Natural killer cell (primary cell): ENCODE measurements at regions of chr10 and their contacts with region 1.

Region 1: DNA sequence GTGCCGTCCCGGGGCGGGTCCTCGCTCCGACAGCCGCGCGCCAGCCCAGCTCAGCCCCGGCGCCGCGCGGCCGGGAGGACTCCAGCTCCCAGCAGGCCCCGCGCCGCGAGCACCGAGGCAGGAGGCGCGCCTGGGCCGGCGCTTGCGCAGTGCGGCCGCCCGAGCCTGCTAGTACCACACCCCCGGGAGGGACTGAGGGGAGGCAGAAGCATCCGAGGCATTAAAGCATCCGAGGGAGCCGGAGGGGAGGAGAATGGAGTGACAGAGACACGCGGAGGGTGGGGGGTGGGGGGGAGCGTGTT is at the start of gene GRK5:
- DNase-seq: peak; percentile 91 to 99
- ATAC-seq: peak; percentile 79 to 92 (median 84)
- H3K4me3 ChIP-seq: peak within 1 kb of the TSS; percentile 47
- H3K4me3 Mint-ChIP-seq: peak within 1 kb of the TSS; percentile 95
- H3K27ac ChIP-seq: peak within 1 kb of the TSS; percentile 70
- H3K27ac Mint-ChIP-seq: peak within 1 kb of the TSS; percentile 94
- H3K4me1 ChIP-seq: peaks cover 34% of the 10 kb centered on the region
- H3K4me1 Mint-ChIP-seq: peaks cover 45 to 47% of the 10 kb centered on the region in 2 donors
- H3K27me3 ChIP-seq: no peaks in the 10 kb centered on the region
- H3K27me3 Mint-ChIP-seq: no peaks in the 10 kb centered on the region
- CTCF ChIP-seq: no peak
- total RNA-seq, gene GRK5: 37.6 to 54.3 (median 47.9) TPM

Region 2: GRCh38 chr10:118986815-118987790 is 220.2 kb before region 1 on chr10:
- intact Hi-C with region 1: no loop called
- DNase-seq: no peak
- ATAC-seq: no peak
- H3K4me3 ChIP-seq: no peak overlapping the region
- H3K4me3 Mint-ChIP-seq: no peak overlapping the region
- H3K27ac ChIP-seq: no peak overlapping the region
- H3K27ac Mint-ChIP-seq: no peak overlapping the region
- H3K4me1 ChIP-seq: no peaks in the 10 kb centered on the region
- H3K4me1 Mint-ChIP-seq: peaks cover 0 to 6% of the 10 kb centered on the region in 2 donors
- H3K27me3 ChIP-seq: no peaks in the 10 kb centered on the region
- H3K27me3 Mint-ChIP-seq: peaks cover 11 to 32% of the 10 kb centered on the region in 2 donors
- CTCF ChIP-seq: no peak

Region 3: GRCh38 chr10:119178372-119179119 is 28.8 kb before region 1 on chr10 and contains the start of gene PRDX3:
- intact Hi-C with region 1: loop called (anchors 2 kb)
- DNase-seq: peak; percentile 90 to 94
- ATAC-seq: peak; percentile 98 to 99 (median 99)
- H3K4me3 ChIP-seq: peak within 1 kb of the TSS; percentile 96
- H3K4me3 Mint-ChIP-seq: peak within 1 kb of the TSS; percentile 97
- H3K27ac ChIP-seq: peak within 1 kb of the TSS; percentile 75
- H3K27ac Mint-ChIP-seq: peak within 1 kb of the TSS; percentile 87 to 98
- H3K4me1 ChIP-seq: peaks cover 19% of the 10 kb centered on the region
- H3K4me1 Mint-ChIP-seq: peaks cover 6 to 13% of the 10 kb centered on the region in 2 donors
- H3K27me3 ChIP-seq: no peaks in the 10 kb centered on the region
- H3K27me3 Mint-ChIP-seq: no peaks in the 10 kb centered on the region
- CTCF ChIP-seq: peak; percentile 14
- total RNA-seq, gene PRDX3: 12.5 to 17.4 (median 15.3) TPM

Region 4: GRCh38 chr10:119219871-119220270 is 12.6 kb after region 1 on chr10:
- intact Hi-C with region 1: loop called (anchors 1 kb)
- DNase-seq: no peak
- ATAC-seq: no peak
- H3K4me3 ChIP-seq: no peak overlapping the region
- H3K4me3 Mint-ChIP-seq: no peak overlapping the region
- H3K27ac ChIP-seq: no peak overlapping the region
- H3K27ac Mint-ChIP-seq: no peak overlapping the region
- H3K4me1 ChIP-seq: no peaks in the 10 kb centered on the region
- H3K4me1 Mint-ChIP-seq: peaks cover 16 to 26% of the 10 kb centered on the region in 2 donors
- H3K27me3 ChIP-seq: no peaks in the 10 kb centered on the region
- H3K27me3 Mint-ChIP-seq: no peaks in the 10 kb centered on the region
- CTCF ChIP-seq: no peak

Region 5: DNA sequence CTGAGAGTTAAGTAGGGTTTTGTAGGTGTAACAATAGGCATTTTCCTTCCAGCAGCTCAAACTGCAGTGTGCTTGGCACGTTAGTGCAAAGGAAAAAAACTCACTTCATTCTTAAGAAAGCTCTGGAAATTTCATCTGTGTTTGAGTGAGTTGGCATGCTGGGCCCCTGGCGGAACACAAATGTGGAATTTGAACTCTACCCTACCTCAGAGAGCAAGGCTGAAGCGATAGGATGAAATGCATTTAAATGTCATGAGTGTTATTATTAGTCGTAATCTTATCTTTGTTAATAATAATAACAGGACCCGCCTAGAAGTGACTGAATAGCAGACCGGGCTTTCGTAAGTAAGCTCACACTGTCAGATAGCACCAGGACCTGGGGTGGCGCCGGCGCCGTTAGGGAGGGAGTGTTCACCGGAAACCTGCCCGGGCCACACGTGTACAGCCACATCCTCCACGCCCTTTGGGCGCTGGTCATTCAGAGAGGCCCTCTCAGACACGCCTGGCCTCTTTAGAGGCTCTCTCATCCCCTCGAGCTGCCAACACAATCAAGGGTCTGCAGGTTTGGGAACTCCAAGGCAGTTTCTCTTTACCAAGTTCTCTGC is 63.5 kb after region 1 on chr10:
- intact Hi-C with region 1: loop called (anchors 1 kb)
- DNase-seq: peak; percentile 75
- ATAC-seq: peak; percentile 41 to 74 (median 57)
- H3K4me3 ChIP-seq: peak overlapping the region; percentile 1
- H3K4me3 Mint-ChIP-seq: peak overlapping the region; percentile 90
- H3K27ac ChIP-seq: peak overlapping the region; percentile 100
- H3K27ac Mint-ChIP-seq: peak overlapping the region; percentile 94 to 99
- H3K4me1 ChIP-seq: peaks cover 81% of the 10 kb centered on the region
- H3K4me1 Mint-ChIP-seq: peaks cover 75% of the 10 kb centered on the region in 2 donors
- H3K27me3 ChIP-seq: no peaks in the 10 kb centered on the region
- H3K27me3 Mint-ChIP-seq: no peaks in the 10 kb centered on the region
- CTCF ChIP-seq: no peak

Region 6: GRCh38 chr10:119305860-119306513 is 98.7 kb after region 1 on chr10:
- intact Hi-C with region 1: loop called (anchors 2 kb)
- DNase-seq: peak; percentile 81 to 91
- ATAC-seq: peak; percentile 69 to 87 (median 80)
- H3K4me3 ChIP-seq: peak overlapping the region; percentile 7
- H3K4me3 Mint-ChIP-seq: peak overlapping the region; percentile 60
- H3K27ac ChIP-seq: peak overlapping the region; percentile 92
- H3K27ac Mint-ChIP-seq: peak overlapping the region; percentile 92
- H3K4me1 ChIP-seq: peaks cover 99% of the 10 kb centered on the region
- H3K4me1 Mint-ChIP-seq: peaks cover 84 to 95% of the 10 kb centered on the region in 2 donors
- H3K27me3 ChIP-seq: peaks cover 10% of the 10 kb centered on the region
- H3K27me3 Mint-ChIP-seq: peaks cover 0 to under 1% of the 10 kb centered on the region in 2 donors
- CTCF ChIP-seq: no peak

Region 7: GRCh38 chr10:119341459-119342301 is 134.4 kb after region 1 on chr10:
- intact Hi-C with region 1: no loop called
- DNase-seq: no peak
- ATAC-seq: peak; percentile 44 to 87 (median 72)
- H3K4me3 ChIP-seq: no peak overlapping the region
- H3K4me3 Mint-ChIP-seq: no peak overlapping the region
- H3K27ac ChIP-seq: no peak overlapping the region
- H3K27ac Mint-ChIP-seq: peak overlapping the region; percentile 50 to 80
- H3K4me1 ChIP-seq: peaks cover 14% of the 10 kb centered on the region
- H3K4me1 Mint-ChIP-seq: peaks cover 41 to 66% of the 10 kb centered on the region in 2 donors
- H3K27me3 ChIP-seq: no peaks in the 10 kb centered on the region
- H3K27me3 Mint-ChIP-seq: peaks cover 0 to 3% of the 10 kb centered on the region in 2 donors
- CTCF ChIP-seq: no peak

Region 8: GRCh38 chr10:119416855-119417254 is 209.5 kb after region 1 on chr10:
- intact Hi-C with region 1: loop called (anchors 1 kb)
- DNase-seq: peak; percentile 60 to 85
- ATAC-seq: peak; percentile 81 to 96 (median 90)
- H3K4me3 ChIP-seq: no peak overlapping the region
- H3K4me3 Mint-ChIP-seq: no peak overlapping the region
- H3K27ac ChIP-seq: no peak overlapping the region
- H3K27ac Mint-ChIP-seq: peak overlapping the region in 1 of 2 donors; percentile 64
- H3K4me1 ChIP-seq: no peaks in the 10 kb centered on the region
- H3K4me1 Mint-ChIP-seq: peaks cover 4 to 5% of the 10 kb centered on the region in 2 donors
- H3K27me3 ChIP-seq: no peaks in the 10 kb centered on the region
- H3K27me3 Mint-ChIP-seq: no peaks in the 10 kb centered on the region
- CTCF ChIP-seq: peak; percentile 54

Region 9: GRCh38 chr10:119445311-119445934 is 238.1 kb after region 1 on chr10:
- intact Hi-C with region 1: loop called (anchors 1 kb)
- DNase-seq: peak; percentile 80 to 93
- ATAC-seq: peak; percentile 77 to 92 (median 90)
- H3K4me3 ChIP-seq: no peak overlapping the region
- H3K4me3 Mint-ChIP-seq: no peak overlapping the region
- H3K27ac ChIP-seq: no peak overlapping the region
- H3K27ac Mint-ChIP-seq: peak overlapping the region in 1 of 2 donors; percentile 21
- H3K4me1 ChIP-seq: peaks cover 4% of the 10 kb centered on the region
- H3K4me1 Mint-ChIP-seq: peaks cover 0 to 11% of the 10 kb centered on the region in 2 donors
- H3K27me3 ChIP-seq: no peaks in the 10 kb centered on the region
- H3K27me3 Mint-ChIP-seq: no peaks in the 10 kb centered on the region
- CTCF ChIP-seq: peak; percentile 89

Region 10: GRCh38 chr10:119798736-119799135 is 591.4 kb after region 1 on chr10:
- intact Hi-C with region 1: no loop called
- DNase-seq: no peak
- ATAC-seq: no peak
- H3K4me3 ChIP-seq: no peak overlapping the region
- H3K4me3 Mint-ChIP-seq: no peak overlapping the region
- H3K27ac ChIP-seq: no peak overlapping the region
- H3K27ac Mint-ChIP-seq: no peak overlapping the region
- H3K4me1 ChIP-seq: no peaks in the 10 kb centered on the region
- H3K4me1 Mint-ChIP-seq: no peaks in the 10 kb centered on the region
- H3K27me3 ChIP-seq: no peaks in the 10 kb centered on the region
- H3K27me3 Mint-ChIP-seq: no peaks in the 10 kb centered on the region
- CTCF ChIP-seq: no peak